Activated CD8-positive, alpha-beta T cell treated with anti-CD3 and anti-CD28 coated beads for 36 hours (primary cell): ENCODE measurements at regions of chr20 and their contacts with region 1.

Region 1: GRCh38 chr20:32285621-32286371 is 8.3 kb downstream of the KIF3B start:
- DNase-seq: peak; percentile 79
- ATAC-seq: peak; percentile 89
- H3K4me3 Mint-ChIP-seq: peak overlapping the region; percentile 61
- H3K27ac Mint-ChIP-seq: peak overlapping the region; percentile 93
- H3K4me1 Mint-ChIP-seq: peaks cover 75% of the 10 kb centered on the region
- H3K27me3 Mint-ChIP-seq: no peaks in the 10 kb centered on the region
- CTCF ChIP-seq: no peak

Region 2: GRCh38 chr20:32231847-32232246 is 53.9 kb before region 1 on chr20:
- CTCF ChIA-PET with region 1: no interaction called
- POLR2A ChIA-PET with region 1: interaction called, 16 read pairs
- intact Hi-C with region 1: no loop called
- DNase-seq: peak; percentile 63
- ATAC-seq: peak; percentile 87
- H3K4me3 Mint-ChIP-seq: peak overlapping the region; percentile 54
- H3K27ac Mint-ChIP-seq: peak overlapping the region; percentile 97
- H3K4me1 Mint-ChIP-seq: peaks cover 38% of the 10 kb centered on the region
- H3K27me3 Mint-ChIP-seq: no peaks in the 10 kb centered on the region
- CTCF ChIP-seq: no peak

Region 3: GRCh38 chr20:32249030-32249738 is 36.6 kb before region 1 on chr20:
- CTCF ChIA-PET with region 1: interaction called, 3 read pairs
- POLR2A ChIA-PET with region 1: interaction called, 16 read pairs
- intact Hi-C with region 1: loop called (anchors 5 kb)
- DNase-seq: peak; percentile 67
- ATAC-seq: peak; percentile 65
- H3K4me3 Mint-ChIP-seq: peak overlapping the region; percentile 15
- H3K27ac Mint-ChIP-seq: peak overlapping the region; percentile 97
- H3K4me1 Mint-ChIP-seq: peaks cover 60% of the 10 kb centered on the region
- H3K27me3 Mint-ChIP-seq: no peaks in the 10 kb centered on the region
- CTCF ChIP-seq: no peak

Region 4: GRCh38 chr20:32336918-32337347 is 51.1 kb after region 1 on chr20:
- CTCF ChIA-PET with region 1: interaction called, 5 read pairs
- POLR2A ChIA-PET with region 1: interaction called, 5 read pairs
- intact Hi-C with region 1: loop called (anchors 5 kb)
- DNase-seq: no peak
- ATAC-seq: no peak
- H3K4me3 Mint-ChIP-seq: no peak overlapping the region
- H3K27ac Mint-ChIP-seq: peak overlapping the region; percentile 65
- H3K4me1 Mint-ChIP-seq: peaks cover 40% of the 10 kb centered on the region
- H3K27me3 Mint-ChIP-seq: no peaks in the 10 kb centered on the region
- CTCF ChIP-seq: peak; percentile 67

Region 5: DNA sequence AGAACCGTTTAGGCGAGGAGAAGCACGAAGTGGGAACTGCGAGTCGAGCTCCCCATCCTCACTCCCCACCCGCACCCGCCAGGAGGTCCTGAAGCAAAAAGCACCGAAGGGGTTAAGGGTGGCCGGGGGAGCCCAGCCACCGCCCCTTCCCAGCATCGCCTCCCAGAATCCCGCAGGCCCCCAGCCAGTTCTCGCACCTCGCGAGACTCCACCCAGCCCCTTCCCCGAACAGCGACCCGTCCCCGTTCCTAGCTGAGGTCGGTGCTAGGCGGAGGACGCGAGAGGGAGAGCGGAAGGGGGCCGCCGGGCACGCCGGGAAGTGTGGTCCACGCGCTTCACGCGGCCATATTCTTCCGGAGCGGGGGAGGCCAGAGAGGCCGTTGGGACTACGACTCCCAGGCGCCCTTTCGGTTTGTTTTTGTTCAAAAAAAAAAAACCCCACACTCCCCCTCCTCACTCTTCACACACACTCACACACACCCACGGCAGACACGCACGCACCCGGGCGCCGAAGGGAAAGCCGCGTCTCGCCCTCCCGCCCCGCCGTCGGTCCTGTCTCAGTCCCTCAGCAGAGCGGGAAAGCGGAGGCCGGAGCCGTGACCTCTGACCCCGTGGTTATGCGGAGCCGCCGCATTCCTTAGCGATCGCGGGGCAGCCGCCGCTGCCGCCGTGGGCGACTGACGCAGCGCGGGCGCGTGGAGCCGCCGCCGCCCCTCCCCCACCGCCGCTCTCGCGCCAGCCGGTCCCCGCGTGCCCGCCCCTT is 72.3 kb after region 1 on chr20 and contains the start of gene ASXL1:
- CTCF ChIA-PET with region 1: no interaction called
- POLR2A ChIA-PET with region 1: interaction called, 11 read pairs
- intact Hi-C with region 1: no loop called
- DNase-seq: peak; percentile 97
- ATAC-seq: peak; percentile 85
- H3K4me3 Mint-ChIP-seq: peak within 1 kb of the TSS; percentile 96
- H3K27ac Mint-ChIP-seq: peak within 1 kb of the TSS; percentile 100
- H3K4me1 Mint-ChIP-seq: peaks cover 59% of the 10 kb centered on the region
- H3K27me3 Mint-ChIP-seq: no peaks in the 10 kb centered on the region
- CTCF ChIP-seq: no peak
- total RNA-seq, gene ASXL1: 129 to 137 TPM

Region 6: GRCh38 chr20:32400476-32400875 is 114.7 kb after region 1 on chr20:
- CTCF ChIA-PET with region 1: no interaction called
- POLR2A ChIA-PET with region 1: no interaction called
- intact Hi-C with region 1: no loop called
- DNase-seq: no peak
- ATAC-seq: no peak
- H3K4me3 Mint-ChIP-seq: no peak overlapping the region
- H3K27ac Mint-ChIP-seq: peak overlapping the region; percentile 9
- H3K4me1 Mint-ChIP-seq: peaks cover 36% of the 10 kb centered on the region
- H3K27me3 Mint-ChIP-seq: no peaks in the 10 kb centered on the region
- CTCF ChIP-seq: no peak